ENCODE measurements at regions of chr7 and their contacts with region 1.

Region 1: GRCh38 chr7:12625836-12626235 is 55.3 kb downstream of the SCIN start:
- DNase-seq: no peak
- H3K4me3 ChIP-seq: no peak overlapping the region
- H3K27ac ChIP-seq: no peak overlapping the region
- H3K4me1 ChIP-seq: no peaks in the 10 kb centered on the region
- H3K27me3 ChIP-seq: no peaks in the 10 kb centered on the region
- CTCF ChIP-seq: no peak
- POLR2A ChIP-seq: no peak

Region 2: GRCh38 chr7:14377646-14378266 is 1751.9 kb after region 1 on chr7:
- intact Hi-C with region 1: loop called (anchors 5 kb)
- DNase-seq: no peak
- H3K4me3 ChIP-seq: no peak overlapping the region
- H3K27ac ChIP-seq: no peak overlapping the region
- H3K4me1 ChIP-seq: no peaks in the 10 kb centered on the region
- H3K27me3 ChIP-seq: no peaks in the 10 kb centered on the region
- CTCF ChIP-seq: no peak
- POLR2A ChIP-seq: no peak

Measured in uterus (tissue), 4 donors.